ENCODE measurements at regions of chr11 and their contacts with region 1.

Region 1: DNA sequence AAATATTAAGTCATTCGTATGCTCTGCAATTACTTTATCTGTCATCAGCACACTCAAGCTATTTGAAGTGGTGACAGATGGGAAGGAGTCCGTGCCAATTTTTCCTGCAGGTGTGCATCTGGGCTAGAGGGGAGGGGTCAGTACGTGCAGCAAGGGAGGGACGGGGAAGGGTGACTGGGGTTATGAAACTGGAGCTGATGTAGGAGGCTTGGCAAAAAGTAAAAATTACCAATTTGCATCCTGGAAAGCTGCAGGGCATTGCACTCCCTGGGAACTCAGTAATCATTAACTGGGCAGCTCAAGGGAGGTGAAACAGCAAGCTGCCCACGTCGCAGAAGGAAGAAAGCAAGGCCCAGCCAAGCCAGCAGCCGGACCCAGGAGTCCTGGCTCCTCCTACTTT is 87.1 kb upstream of the TMEM45B start:
- DNase-seq: no peak
- CTCF ChIP-seq: no peak

Region 2: GRCh38 chr11:129364143-129364654 is 364.4 kb before region 1 on chr11:
- in situ Hi-C with region 1: loop called (anchors 25 kb)
- DNase-seq: peak; percentile 70
- CTCF ChIP-seq: peak; percentile 100

Region 3: GRCh38 chr11:130677486-130678153 is 949.0 kb after region 1 on chr11:
- in situ Hi-C with region 1: no loop called
- DNase-seq: no peak
- CTCF ChIP-seq: no peak